GM12878 (cell line): ENCODE measurements at regions of chr5 and their contacts with region 1.

Region 1: DNA sequence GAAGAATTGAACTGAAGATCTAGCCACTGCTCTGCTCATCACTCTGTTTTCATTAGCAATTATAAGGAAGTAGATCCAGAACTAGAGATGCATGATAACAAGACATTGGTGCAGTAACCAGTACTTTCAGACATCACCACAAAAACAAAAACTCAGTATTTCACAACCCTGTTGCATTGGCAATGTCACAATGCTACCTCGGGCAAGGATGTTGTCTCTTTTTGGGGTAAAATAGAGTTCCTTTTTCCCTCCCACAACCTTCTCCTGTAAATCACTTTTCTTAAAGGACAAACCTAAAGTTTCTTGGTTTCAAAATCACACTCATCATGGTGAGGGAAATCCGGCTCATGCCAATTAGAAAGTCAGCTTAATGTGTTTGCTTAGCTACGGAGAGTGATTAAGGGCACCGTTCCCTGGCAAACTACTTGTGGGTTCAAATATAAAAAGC is 420.1 kb upstream of the MEF2C start:
- DNase-seq: peak; percentile 84
- ATAC-seq: peak; percentile 75
- H3K4me3 ChIP-seq: peak overlapping the region; percentile 16; the same call in 1 of the 2 replicates
- H3K27ac ChIP-seq: peak overlapping the region; percentile 78
- H3K4me1 ChIP-seq: peaks cover 37% of the 10 kb centered on the region
- H3K27me3 ChIP-seq: no peaks in the 10 kb centered on the region
- CTCF ChIP-seq: no peak
- EP300 ChIP-seq: peak in 1 of 2 experiments; percentile 40; a peak in 1 of 4 replicates
- POLR2A ChIP-seq: no peak
- RAD21 ChIP-seq: no peak; the same call in 1 of the 2 replicates

Region 2: GRCh38 chr5:88875341-88876234 is 427.5 kb before region 1 on chr5:
- CTCF ChIA-PET with region 1: no interaction called
- POLR2A ChIA-PET with region 1: interaction called, 6 read pairs
- RAD21 ChIA-PET with region 1: no interaction called
- SMC1A ChIA-PET with region 1: interaction called, 3 read pairs
- in situ Hi-C with region 1: loop called (anchors 10 kb)
- intact Hi-C with region 1: loop called (anchors 2 kb)
- DNase-seq: no peak
- ATAC-seq: peak; percentile 65
- H3K4me3 ChIP-seq: peak overlapping the region; percentile 65
- H3K27ac ChIP-seq: peak overlapping the region; percentile 67
- H3K4me1 ChIP-seq: no peaks in the 10 kb centered on the region
- H3K27me3 ChIP-seq: no peaks in the 10 kb centered on the region
- CTCF ChIP-seq: no peak
- EP300 ChIP-seq: no peak
- POLR2A ChIP-seq: peak; percentile 22; the same call in 1 of the 2 replicates
- RAD21 ChIP-seq: no peak

Region 3: GRCh38 chr5:89097103-89097502 is 206.0 kb before region 1 on chr5:
- CTCF ChIA-PET with region 1: no interaction called
- POLR2A ChIA-PET with region 1: no interaction called
- RAD21 ChIA-PET with region 1: interaction called, 12 read pairs
- SMC1A ChIA-PET with region 1: interaction called, 3 read pairs
- in situ Hi-C with region 1: no loop called
- intact Hi-C with region 1: no loop called
- DNase-seq: peak; percentile 52
- ATAC-seq: peak; percentile 88
- H3K4me3 ChIP-seq: peak overlapping the region; percentile 26; the same call in 1 of the 2 replicates
- H3K27ac ChIP-seq: peak overlapping the region; percentile 52
- H3K4me1 ChIP-seq: peaks cover 12% of the 10 kb centered on the region
- H3K27me3 ChIP-seq: no peaks in the 10 kb centered on the region
- CTCF ChIP-seq: no peak
- EP300 ChIP-seq: peak; percentile 87 to 95
- POLR2A ChIP-seq: no peak
- RAD21 ChIP-seq: no peak

Region 4: GRCh38 chr5:89282554-89283510 is 20.2 kb before region 1 on chr5:
- CTCF ChIA-PET with region 1: interaction called, 3 read pairs
- POLR2A ChIA-PET with region 1: interaction called, 4 read pairs
- RAD21 ChIA-PET with region 1: interaction called, 8 read pairs
- SMC1A ChIA-PET with region 1: interaction called, 22 read pairs
- in situ Hi-C with region 1: no loop called
- intact Hi-C with region 1: no loop called
- DNase-seq: peak; percentile 31
- ATAC-seq: peak; percentile 54
- H3K4me3 ChIP-seq: no peak overlapping the region
- H3K27ac ChIP-seq: peak overlapping the region; percentile 59
- H3K4me1 ChIP-seq: peaks cover 40% of the 10 kb centered on the region
- H3K27me3 ChIP-seq: no peaks in the 10 kb centered on the region
- CTCF ChIP-seq: no peak
- EP300 ChIP-seq: peak in 1 of 2 experiments; percentile 30; a peak in 1 of 4 replicates
- POLR2A ChIP-seq: no peak
- RAD21 ChIP-seq: peak; percentile 1; the same call in 1 of the 2 replicates

Region 5: GRCh38 chr5:89351232-89351631 is 48.2 kb after region 1 on chr5:
- CTCF ChIA-PET with region 1: no interaction called
- POLR2A ChIA-PET with region 1: no interaction called
- RAD21 ChIA-PET with region 1: interaction called, 9 read pairs
- SMC1A ChIA-PET with region 1: interaction called, 36 read pairs
- in situ Hi-C with region 1: no loop called
- intact Hi-C with region 1: no loop called
- DNase-seq: no peak
- ATAC-seq: peak; percentile 16
- H3K4me3 ChIP-seq: no peak overlapping the region
- H3K27ac ChIP-seq: peak overlapping the region; percentile 68; the same call in 1 of the 2 replicates
- H3K4me1 ChIP-seq: peaks cover 18% of the 10 kb centered on the region; the same call in 1 of the 2 replicates
- H3K27me3 ChIP-seq: no peaks in the 10 kb centered on the region
- CTCF ChIP-seq: no peak
- EP300 ChIP-seq: 0 out of 4 replicates have a peak, but pooled peaks of 1 of the 2 experiments have one; percentile 54
- POLR2A ChIP-seq: no peak
- RAD21 ChIP-seq: no peak

Region 6: DNA sequence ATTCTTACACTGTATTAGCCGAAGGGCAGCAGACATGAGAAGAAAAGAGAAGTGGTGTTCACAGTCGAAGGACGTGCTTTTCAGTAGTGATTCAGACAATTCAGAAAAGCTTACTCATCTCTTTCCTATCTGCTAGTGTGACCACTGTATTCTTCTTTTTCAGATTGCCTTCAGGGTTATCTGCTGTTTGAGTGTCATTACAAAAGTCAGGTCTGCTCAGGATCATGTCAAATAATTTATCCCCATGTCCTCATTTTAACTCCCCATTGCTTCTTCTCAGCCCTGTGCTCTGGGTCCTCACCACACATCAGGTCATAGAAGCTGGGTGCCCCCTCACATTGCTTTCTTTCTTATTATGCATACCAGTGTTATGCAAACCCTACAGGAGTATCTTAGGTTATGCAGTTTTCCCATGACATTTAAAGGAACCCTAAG is 712.5 kb after region 1 on chr5:
- CTCF ChIA-PET with region 1: no interaction called
- POLR2A ChIA-PET with region 1: no interaction called
- RAD21 ChIA-PET with region 1: no interaction called
- SMC1A ChIA-PET with region 1: no interaction called
- in situ Hi-C with region 1: no loop called
- intact Hi-C with region 1: loop called (anchors 10 kb)
- DNase-seq: peak; percentile 82
- ATAC-seq: peak; percentile 96
- H3K4me3 ChIP-seq: no peak overlapping the region
- H3K27ac ChIP-seq: peak overlapping the region; percentile 7
- H3K4me1 ChIP-seq: peaks cover 28% of the 10 kb centered on the region
- H3K27me3 ChIP-seq: no peaks in the 10 kb centered on the region
- CTCF ChIP-seq: 0 out of 6 replicates have a peak, but pooled peaks of 1 of the 3 experiments have one; percentile 4
- EP300 ChIP-seq: peak; percentile 50 to 73
- POLR2A ChIP-seq: no peak
- RAD21 ChIP-seq: no peak